ENCODE measurements at regions of chr10 and their contacts with region 1.

Region 1: DNA sequence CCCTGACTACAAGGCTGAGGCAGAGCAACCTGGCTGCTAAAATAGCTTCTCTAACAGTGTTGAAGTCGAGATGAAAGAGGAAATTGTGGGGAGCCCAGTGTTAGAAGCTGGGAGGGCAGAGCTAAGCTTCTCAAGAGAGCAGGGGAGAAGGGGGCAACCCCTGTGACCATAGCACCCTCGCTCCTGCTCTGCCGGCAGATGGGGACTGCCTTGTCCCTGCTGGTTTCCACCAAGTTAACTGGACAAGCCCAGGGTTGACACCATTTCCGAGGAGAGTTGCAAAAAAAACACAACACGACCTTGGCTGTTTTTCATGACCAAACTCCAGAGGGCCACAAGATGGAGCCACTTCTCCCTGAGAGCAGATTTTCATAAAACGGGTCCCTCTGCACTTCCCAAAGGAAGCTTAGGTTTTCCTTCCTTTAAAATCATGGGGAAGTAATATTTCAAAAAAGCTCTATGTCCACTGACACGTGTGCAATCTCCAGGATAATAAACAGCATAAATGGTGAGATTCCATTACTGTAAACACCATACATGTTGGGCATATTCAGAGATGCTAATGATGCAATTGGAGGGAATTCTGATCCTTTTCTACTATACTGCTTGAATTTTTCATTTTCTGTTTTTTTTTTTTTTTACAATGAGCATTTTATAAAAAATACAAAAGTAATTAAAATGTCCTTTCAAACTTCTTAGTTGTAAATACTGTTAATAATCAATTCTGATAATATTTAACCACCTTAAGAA is 140.4 kb downstream of the PIP4K2A start:
- DNase-seq: peak; percentile 16 to 27
- ATAC-seq: peak in 1 of 2 experiments; percentile 49; a peak in 1 of 6 replicates
- H3K4me3 ChIP-seq: no peak overlapping the region
- H3K27ac ChIP-seq: no peak overlapping the region
- H3K4me1 ChIP-seq: no peaks in the 10 kb centered on the region
- CTCF ChIP-seq: peak; percentile 59
- EP300 ChIP-seq: no peak
- POLR2A ChIP-seq: no peak
- RAD21 ChIP-seq: peak; percentile 57 to 61

Region 2: DNA sequence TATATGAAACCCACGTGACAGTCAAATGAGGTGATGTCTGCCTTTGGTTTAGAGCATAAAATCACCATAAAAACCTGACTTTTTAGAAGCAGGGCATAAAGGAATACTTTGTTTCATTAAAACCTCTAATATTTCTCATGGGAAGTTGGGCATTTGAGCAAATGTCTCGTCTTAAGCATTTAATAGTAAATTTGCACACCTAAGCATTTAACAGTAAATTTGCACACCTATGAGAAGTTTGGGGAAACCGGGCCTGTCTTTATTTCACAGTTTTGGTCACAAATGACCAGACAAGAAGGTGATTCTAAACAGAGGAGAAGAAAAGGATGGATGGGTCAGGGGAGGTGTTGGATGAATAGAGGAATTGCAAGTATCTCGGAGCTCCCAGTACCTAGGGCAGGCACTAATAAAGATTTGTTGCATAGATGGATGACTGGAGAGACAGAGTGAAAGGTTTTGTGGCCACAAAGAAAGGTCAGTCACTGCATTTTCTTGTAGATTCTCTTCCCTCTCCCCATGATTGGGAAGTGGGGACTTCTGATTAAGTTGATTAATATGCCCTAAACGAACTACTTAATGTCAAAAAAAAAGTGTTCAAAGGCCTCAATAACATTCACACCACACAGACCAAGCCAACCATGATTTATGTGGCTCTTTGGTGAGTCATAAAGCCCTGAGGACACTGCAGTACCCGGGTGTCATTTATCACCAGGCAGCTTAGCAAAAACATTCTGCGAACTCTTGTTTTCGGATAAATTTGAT is 70.5 kb before region 1 on chr10:
- CTCF ChIA-PET with region 1: no interaction called
- POLR2A ChIA-PET with region 1: interaction called, 12 read pairs
- DNase-seq: peak in 1 of 2 experiments; percentile 12
- ATAC-seq: no peak
- H3K4me3 ChIP-seq: no peak overlapping the region
- H3K27ac ChIP-seq: no peak overlapping the region
- H3K4me1 ChIP-seq: no peaks in the 10 kb centered on the region
- CTCF ChIP-seq: no peak
- EP300 ChIP-seq: no peak
- POLR2A ChIP-seq: no peak
- RAD21 ChIP-seq: no peak

Region 3: DNA sequence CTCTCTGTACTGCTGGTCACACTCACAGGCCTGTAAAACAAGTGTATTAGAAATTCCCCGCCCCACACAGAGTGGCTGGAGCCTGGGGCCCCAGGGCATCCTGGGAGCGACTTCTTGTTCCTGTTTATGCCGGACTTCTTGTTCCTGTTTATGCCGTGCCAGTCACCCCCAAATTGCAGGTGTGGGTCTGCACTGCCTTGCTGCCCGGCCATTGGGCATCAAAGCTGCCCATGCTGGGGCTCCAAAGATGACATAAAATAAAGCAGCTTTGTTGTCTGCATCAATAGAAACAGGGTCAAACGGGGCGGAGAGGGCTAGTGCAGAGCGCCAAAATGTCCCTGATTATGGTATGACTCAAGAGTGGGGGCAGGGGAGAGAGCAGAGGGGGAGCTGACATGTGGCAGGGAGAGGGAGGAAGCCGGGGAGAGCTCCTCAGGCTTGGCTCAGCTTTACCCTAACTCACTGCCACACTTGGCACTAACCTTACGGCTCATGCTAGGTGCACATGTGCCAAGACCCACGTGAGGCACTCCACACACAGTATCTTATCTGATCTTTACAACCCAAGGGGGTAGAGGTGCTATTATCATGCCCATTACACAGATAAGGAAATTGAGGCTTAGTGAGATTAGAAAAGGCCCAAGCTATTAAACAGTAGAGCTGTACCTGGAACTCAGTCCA is 42.0 kb after region 1 on chr10:
- CTCF ChIA-PET with region 1: no interaction called
- POLR2A ChIA-PET with region 1: no interaction called
- DNase-seq: no peak
- ATAC-seq: no peak
- H3K4me3 ChIP-seq: no peak overlapping the region
- H3K27ac ChIP-seq: peak overlapping the region in 1 of 2 experiments; percentile 49; a peak in 2 of 6 replicates
- H3K4me1 ChIP-seq: peaks cover 48% of the 10 kb centered on the region
- CTCF ChIP-seq: no peak
- EP300 ChIP-seq: no peak
- POLR2A ChIP-seq: no peak
- RAD21 ChIP-seq: no peak

Measured in A549 (cell line).